Gastrocnemius medialis (tissue), 4 donors: ENCODE measurements at regions of chr18 and their contacts with region 1.

Region 1: DNA sequence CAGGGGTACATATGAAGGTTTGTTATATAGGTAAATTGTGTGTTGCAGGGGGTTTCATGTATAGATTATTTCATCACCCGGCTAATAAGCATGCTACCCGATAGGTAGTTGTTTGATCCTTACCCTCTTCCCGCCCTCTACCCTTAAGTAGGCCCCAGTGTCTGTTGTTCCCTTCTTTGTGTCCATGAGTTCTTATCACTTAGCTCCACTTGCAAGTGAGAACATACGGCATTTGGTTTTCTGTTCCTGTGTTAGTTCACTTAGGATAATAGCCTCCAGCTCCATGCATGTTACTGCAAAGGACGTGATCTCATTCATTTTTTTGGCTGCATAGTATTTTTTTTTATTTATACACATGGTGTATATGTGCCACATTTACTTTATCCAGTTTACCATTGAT is 34.2 kb upstream of the ELAC1 start:
- DNase-seq: no peak
- ATAC-seq: no peak
- H3K4me3 ChIP-seq: no peak overlapping the region
- H3K27ac ChIP-seq: no peak overlapping the region
- H3K4me1 ChIP-seq: no peaks in the 10 kb centered on the region
- H3K27me3 ChIP-seq: no peaks in the 10 kb centered on the region
- CTCF ChIP-seq: no peak
- POLR2A ChIP-seq: no peak

Region 2: GRCh38 chr18:50992351-50992762 is 58.7 kb after region 1 on chr18:
- in situ Hi-C with region 1: no loop called
- intact Hi-C with region 1: loop called (anchors 10 kb)
- DNase-seq: no peak
- ATAC-seq: no peak
- H3K4me3 ChIP-seq: no peak overlapping the region
- H3K27ac ChIP-seq: peak overlapping the region in 1 of 4 donors; percentile 20
- H3K4me1 ChIP-seq: peaks cover 17 to 34% of the 10 kb centered on the region in 2 donors
- H3K27me3 ChIP-seq: no peaks in the 10 kb centered on the region
- CTCF ChIP-seq: no peak
- POLR2A ChIP-seq: no peak